GM12878 (cell line): ENCODE measurements at regions of chr12 and their contacts with region 1.

Region 1: GRCh38 chr12:11697670-11698387 is 48.4 kb downstream of the ETV6 start:
- DNase-seq: no peak
- ATAC-seq: no peak
- H3K4me3 ChIP-seq: no peak overlapping the region
- H3K27ac ChIP-seq: no peak overlapping the region
- H3K4me1 ChIP-seq: peaks cover 12% of the 10 kb centered on the region
- H3K27me3 ChIP-seq: no peaks in the 10 kb centered on the region
- CTCF ChIP-seq: no peak
- EP300 ChIP-seq: no peak
- POLR2A ChIP-seq: no peak
- RAD21 ChIP-seq: no peak

Region 2: GRCh38 chr12:11633968-11634367 is 63.9 kb before region 1 on chr12:
- CTCF ChIA-PET with region 1: no interaction called
- POLR2A ChIA-PET with region 1: no interaction called
- RAD21 ChIA-PET with region 1: no interaction called
- SMC1A ChIA-PET with region 1: no interaction called
- in situ Hi-C with region 1: no loop called
- intact Hi-C with region 1: no loop called
- DNase-seq: no peak
- ATAC-seq: no peak
- H3K4me3 ChIP-seq: no peak overlapping the region
- H3K27ac ChIP-seq: no peak overlapping the region
- H3K4me1 ChIP-seq: no peaks in the 10 kb centered on the region
- H3K27me3 ChIP-seq: no peaks in the 10 kb centered on the region
- CTCF ChIP-seq: no peak
- EP300 ChIP-seq: no peak
- POLR2A ChIP-seq: no peak
- RAD21 ChIP-seq: no peak

Region 3: DNA sequence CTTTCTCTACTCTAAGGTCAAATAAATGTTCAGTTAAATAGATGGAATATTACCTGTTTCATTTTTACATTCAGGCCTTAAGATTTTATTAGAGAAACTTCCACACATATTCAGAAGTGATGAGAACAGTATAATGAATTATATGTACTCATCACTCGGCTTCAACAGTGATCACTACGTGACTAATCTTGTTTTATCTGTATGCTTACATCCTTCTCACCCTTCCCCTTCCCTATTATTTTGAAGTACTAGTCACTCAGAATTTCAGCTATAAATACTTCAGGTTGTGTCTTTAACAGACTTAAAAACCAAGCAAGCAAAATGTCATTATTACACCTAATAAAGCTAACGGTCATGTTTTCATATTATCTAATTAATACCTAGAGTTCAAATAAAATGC is 13.4 kb before region 1 on chr12:
- CTCF ChIA-PET with region 1: interaction called, 7 read pairs
- POLR2A ChIA-PET with region 1: interaction called, 14 read pairs
- RAD21 ChIA-PET with region 1: no interaction called
- SMC1A ChIA-PET with region 1: interaction called, 11 read pairs
- in situ Hi-C with region 1: no loop called
- intact Hi-C with region 1: no loop called
- DNase-seq: no peak
- ATAC-seq: 0 out of 3 replicates have a peak, but pooled peaks have one; percentile 17
- H3K4me3 ChIP-seq: no peak overlapping the region
- H3K27ac ChIP-seq: no peak overlapping the region
- H3K4me1 ChIP-seq: peaks cover 12% of the 10 kb centered on the region
- H3K27me3 ChIP-seq: no peaks in the 10 kb centered on the region
- CTCF ChIP-seq: no peak
- EP300 ChIP-seq: no peak
- POLR2A ChIP-seq: no peak
- RAD21 ChIP-seq: no peak